ENCODE measurements at regions of chr5 and their contacts with region 1.

Region 1: GRCh38 chr5:115246361-115246991 is 16.2 kb downstream of the PGGT1B start:
- DNase-seq: no peak
- H3K4me3 ChIP-seq: no peak overlapping the region
- H3K27ac ChIP-seq: no peak overlapping the region
- H3K4me1 ChIP-seq: peaks cover 0 to 53% (median 10%) of the 10 kb centered on the region in 6 donors
- H3K27me3 ChIP-seq: no peaks in the 10 kb centered on the region
- CTCF ChIP-seq: peak in 10 of 11 experiments; percentile 35 to 70 (median 64)
- POLR2A ChIP-seq: no peak

Region 2: DNA sequence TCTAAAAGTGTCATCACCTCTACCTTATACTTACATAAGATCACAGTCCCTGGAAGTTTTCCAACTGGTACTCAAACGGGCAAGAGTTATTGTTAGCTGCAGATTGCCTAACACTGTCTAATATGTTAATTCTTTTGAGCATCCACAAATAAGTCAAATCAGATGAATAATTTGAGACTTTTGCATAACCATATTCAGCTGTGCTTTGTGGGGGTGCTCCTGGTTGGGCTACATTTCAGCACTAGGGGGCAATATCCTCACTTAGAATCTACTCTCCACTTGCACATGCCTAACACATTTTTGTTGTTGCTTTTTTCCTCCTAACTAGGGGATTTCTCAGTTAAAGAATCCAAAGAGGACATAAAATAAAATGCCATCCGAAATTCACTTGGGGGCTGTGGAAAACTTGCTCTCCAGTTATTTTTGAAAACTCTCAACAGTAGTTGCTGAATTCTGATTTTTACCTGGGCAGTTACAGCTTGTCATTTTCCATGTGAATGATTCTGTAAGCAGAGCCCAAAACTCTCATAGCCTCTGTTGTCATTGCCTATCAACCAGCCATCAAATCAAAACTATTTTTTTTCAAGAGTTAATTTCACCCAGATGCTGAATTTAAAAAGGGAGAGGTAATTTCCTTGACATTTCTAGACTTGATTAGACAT is 148.3 kb before region 1 on chr5:
- intact Hi-C with region 1: loop called (anchors 2 kb)
- DNase-seq: no peak
- H3K4me3 ChIP-seq: no peak overlapping the region
- H3K27ac ChIP-seq: no peak overlapping the region
- H3K4me1 ChIP-seq: no peaks in the 10 kb centered on the region
- H3K27me3 ChIP-seq: no peaks in the 10 kb centered on the region
- CTCF ChIP-seq: peak; percentile 27 to 84 (median 73)
- POLR2A ChIP-seq: no peak

Region 3: DNA sequence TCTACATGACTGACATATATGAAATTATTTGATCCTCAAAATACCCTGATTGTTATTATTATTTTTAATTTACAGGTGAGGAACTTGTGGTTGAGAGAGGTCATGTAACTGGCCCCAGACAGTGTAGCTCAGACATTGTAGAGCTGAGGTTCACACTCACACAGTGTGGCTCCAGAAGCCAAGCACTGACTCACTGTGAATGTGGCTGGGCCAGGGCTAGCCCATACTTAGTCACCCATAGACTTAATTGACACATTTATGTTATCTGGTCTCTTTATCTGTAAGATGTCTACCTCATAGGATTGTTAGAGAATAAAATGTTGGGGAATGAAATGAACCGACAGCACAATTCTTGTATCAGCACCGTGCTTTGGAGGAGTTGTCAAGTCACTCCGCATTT is 74.8 kb after region 1 on chr5:
- intact Hi-C with region 1: no loop called
- DNase-seq: no peak
- H3K4me3 ChIP-seq: no peak overlapping the region
- H3K27ac ChIP-seq: no peak overlapping the region
- H3K4me1 ChIP-seq: no peaks in the 10 kb centered on the region
- H3K27me3 ChIP-seq: peaks cover 0 to 12% (median 0%) of the 10 kb centered on the region in 7 donors
- CTCF ChIP-seq: no peak
- POLR2A ChIP-seq: no peak